Activated naive CD8-positive, alpha-beta T cell treated with anti-CD3 and anti-CD28 coated beads, Interleukin-2, amount 10 ng/mL, durations not matched to agents 7 days and 5 days (primary cell): ENCODE measurements at regions of chr19 and their contacts with region 1.

Region 1: DNA sequence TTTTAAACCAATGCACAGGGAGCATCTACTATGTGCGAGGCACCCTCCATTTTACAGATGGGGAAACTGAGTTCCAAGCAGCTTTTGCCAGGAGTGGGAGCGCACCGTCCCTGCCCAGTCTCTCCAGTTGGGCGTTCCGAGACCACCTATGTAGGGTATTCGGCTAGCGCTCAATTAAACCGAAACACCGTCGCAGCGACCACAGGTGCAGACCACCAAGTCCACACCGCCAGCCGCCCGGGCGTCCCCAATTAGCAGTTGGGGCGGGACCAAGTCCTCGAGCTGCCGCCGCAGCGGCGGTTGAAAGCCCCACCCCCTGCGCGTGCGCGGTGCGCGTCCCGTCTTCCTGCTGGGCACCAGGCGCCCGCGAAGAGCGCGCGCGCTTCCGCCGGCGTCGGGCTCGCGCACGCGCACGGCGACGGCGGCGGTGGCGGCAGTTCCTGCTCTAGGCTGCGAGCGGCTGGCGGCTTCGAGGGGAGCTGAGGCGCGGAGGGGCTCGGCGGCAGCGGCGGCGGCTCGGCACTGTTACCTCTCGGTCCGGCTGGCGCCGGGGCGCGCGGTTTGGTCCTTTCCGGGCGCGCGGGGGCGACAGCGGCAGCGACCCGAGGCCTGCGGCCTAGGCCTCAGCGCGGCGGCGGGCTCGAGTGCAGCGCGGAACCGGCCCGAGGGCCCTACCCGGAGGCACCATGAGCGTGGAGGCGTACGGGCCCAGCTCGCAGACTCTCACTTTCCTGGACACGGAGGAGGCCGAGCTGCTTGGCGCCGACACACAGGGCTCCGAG is at the start of gene UPF1:
- DNase-seq: peak; percentile 99
- ATAC-seq: peak; percentile 70
- H3K4me3 Mint-ChIP-seq: peak within 1 kb of the TSS; percentile 89
- H3K27ac Mint-ChIP-seq: peak within 1 kb of the TSS; percentile 87
- H3K4me1 Mint-ChIP-seq: peaks cover 31% of the 10 kb centered on the region
- H3K27me3 Mint-ChIP-seq: peaks cover 13% of the 10 kb centered on the region
- total RNA-seq, gene UPF1: 90.4 to 93.2 TPM

Region 2: DNA sequence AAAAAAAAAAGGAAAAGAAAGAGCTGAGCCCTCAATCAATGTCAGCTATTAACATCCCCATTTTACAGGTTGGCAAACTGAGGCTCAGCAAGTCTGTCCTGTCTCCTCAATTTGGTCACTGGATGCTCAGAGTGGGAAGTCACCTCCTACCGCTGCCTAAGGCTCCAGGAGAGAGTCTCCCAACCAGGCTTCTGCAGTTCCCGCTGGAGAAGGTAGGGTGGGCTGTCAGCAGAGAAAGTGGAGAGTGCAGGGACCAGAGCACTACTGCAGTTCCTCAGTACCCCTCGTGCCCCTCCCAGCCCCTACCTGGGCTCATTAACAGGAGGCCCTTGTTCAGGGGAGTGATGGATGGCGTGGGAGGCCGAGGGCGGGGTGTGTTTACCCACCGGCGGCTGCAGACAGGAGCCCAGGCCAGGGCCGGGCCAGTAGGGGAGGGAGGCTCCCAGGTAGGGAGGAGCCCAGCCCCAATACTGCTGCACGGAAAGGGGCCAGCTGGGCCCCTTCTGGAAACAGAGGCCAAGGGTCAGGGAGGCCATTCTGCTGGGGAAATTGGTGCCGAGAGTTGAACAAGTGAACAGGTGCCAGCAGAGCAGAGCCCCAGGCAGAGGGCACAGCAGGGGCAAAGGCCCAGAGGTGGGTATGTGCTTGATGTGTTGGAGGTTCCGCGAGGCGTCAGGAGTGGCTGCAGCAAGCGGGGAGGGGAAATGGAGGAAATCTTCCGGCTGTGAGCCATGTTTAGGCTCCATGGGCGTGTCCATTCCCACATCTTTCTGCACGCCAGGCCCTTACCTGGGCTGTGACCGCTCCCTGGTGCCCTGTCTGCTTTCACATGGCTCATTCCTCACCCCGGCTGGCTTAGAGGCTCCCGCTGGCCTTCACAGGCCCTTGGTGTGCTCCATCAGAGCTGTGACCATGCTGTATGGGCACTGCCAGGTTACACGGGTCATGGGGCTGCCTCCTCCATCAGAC is 33.0 kb before region 1 on chr19:
- POLR2A ChIA-PET with region 1: no interaction called
- DNase-seq: no peak
- ATAC-seq: no peak
- H3K4me3 Mint-ChIP-seq: no peak overlapping the region
- H3K27ac Mint-ChIP-seq: no peak overlapping the region
- H3K4me1 Mint-ChIP-seq: no peaks in the 10 kb centered on the region
- H3K27me3 Mint-ChIP-seq: peaks cover 42% of the 10 kb centered on the region

Region 3: DNA sequence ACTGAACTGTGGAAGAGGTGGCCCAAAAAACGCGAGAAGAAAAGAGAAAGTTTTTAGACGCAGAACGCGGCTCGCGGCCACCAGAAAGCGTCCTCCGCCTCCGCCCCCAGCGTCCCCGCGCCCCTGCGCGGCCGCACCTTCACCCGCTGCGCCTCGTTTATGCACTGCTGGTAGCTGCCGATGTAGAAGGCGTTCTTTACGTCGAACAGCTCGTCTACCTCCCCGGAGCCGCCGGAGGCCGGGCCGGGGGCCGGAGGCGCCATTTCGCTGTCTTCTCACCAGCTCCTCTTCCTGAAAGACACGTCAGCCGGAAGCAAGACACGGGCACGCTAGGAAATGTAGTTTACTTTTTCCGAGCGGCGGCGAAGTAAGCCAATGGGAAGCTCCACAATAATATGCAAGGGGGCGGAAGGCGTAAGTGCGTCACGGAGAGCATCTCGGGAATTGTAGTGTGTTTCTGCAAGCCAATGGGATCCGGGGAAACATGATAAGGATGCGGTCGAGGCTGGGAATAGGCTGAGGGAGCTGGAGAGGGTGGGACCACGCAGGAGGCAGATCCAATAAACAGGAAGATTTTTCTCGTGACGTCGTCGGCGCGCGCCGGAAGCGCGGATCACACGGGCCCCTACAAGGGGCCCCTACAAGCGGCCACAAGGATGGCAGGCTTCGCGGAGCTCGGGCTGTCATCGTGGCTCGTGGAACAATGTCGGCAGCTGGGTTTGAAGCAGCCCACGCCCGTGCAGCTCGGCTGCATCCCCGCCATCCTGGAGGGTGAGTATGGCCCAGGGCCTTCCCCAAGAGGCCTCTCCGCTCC is 87.6 kb after region 1 on chr19 and contains the starts of genes COPE and DDX49:
- POLR2A ChIA-PET with region 1: interaction called, 16 read pairs
- DNase-seq: peak; percentile 94
- ATAC-seq: peak; percentile 93
- H3K4me3 Mint-ChIP-seq: peak within 1 kb of the TSS; percentile 93
- H3K27ac Mint-ChIP-seq: peak within 1 kb of the TSS; percentile 94
- H3K4me1 Mint-ChIP-seq: peaks cover 16% of the 10 kb centered on the region
- H3K27me3 Mint-ChIP-seq: no peaks in the 10 kb centered on the region
- total RNA-seq, gene COPE: 209 to 213 TPM
- total RNA-seq, gene DDX49: 42.3 to 42.8 TPM